ENCODE measurements at regions of chr16 and their contacts with region 1.

Region 1: GRCh38 chr16:23071196-23072083 is 77.8 kb downstream of the USP31 start:
- DNase-seq: no peak
- ATAC-seq: no peak
- H3K4me3 ChIP-seq: no peak overlapping the region
- H3K27ac ChIP-seq: no peak overlapping the region
- H3K4me1 ChIP-seq: no peaks in the 10 kb centered on the region
- H3K27me3 ChIP-seq: no peaks in the 10 kb centered on the region
- CTCF ChIP-seq: no peak

Region 2: GRCh38 chr16:23105309-23105708 is 33.9 kb after region 1 on chr16:
- CTCF ChIA-PET with region 1: no interaction called
- POLR2A ChIA-PET with region 1: interaction called, 11 read pairs
- in situ Hi-C with region 1: no loop called
- intact Hi-C with region 1: no loop called
- DNase-seq: no peak
- ATAC-seq: no peak
- H3K4me3 ChIP-seq: no peak overlapping the region
- H3K27ac ChIP-seq: no peak overlapping the region
- H3K4me1 ChIP-seq: no peaks in the 10 kb centered on the region
- H3K27me3 ChIP-seq: no peaks in the 10 kb centered on the region
- CTCF ChIP-seq: no peak

Measured in Panc1 (cell line).